Mammary epithelial cell (primary cell): ENCODE measurements at regions of chr4 and their contacts with region 1.

Region 1: GRCh38 chr4:1594871-1595811 is 89.0 kb downstream of the FAM53A start:
- DNase-seq: no peak
- H3K4me3 ChIP-seq: no peak overlapping the region
- H3K27ac ChIP-seq: no peak overlapping the region
- H3K4me1 ChIP-seq: no peaks in the 10 kb centered on the region
- H3K27me3 ChIP-seq: peaks cover 20% of the 10 kb centered on the region
- CTCF ChIP-seq: no peak

Region 2: GRCh38 chr4:766152-766515 is 829.0 kb before region 1 on chr4:
- CTCF ChIA-PET with region 1: no interaction called
- dilution Hi-C with region 1: no loop called
- in situ Hi-C with region 1: no loop called
- intact Hi-C with region 1: no loop called
- DNase-seq: peak; percentile 54
- H3K4me3 ChIP-seq: no peak overlapping the region
- H3K27ac ChIP-seq: no peak overlapping the region
- H3K4me1 ChIP-seq: peaks cover 14% of the 10 kb centered on the region
- H3K27me3 ChIP-seq: no peaks in the 10 kb centered on the region
- CTCF ChIP-seq: no peak

Region 3: GRCh38 chr4:1210971-1211370 is 384.2 kb before region 1 on chr4:
- CTCF ChIA-PET with region 1: interaction called, 11 read pairs
- dilution Hi-C with region 1: no loop called
- in situ Hi-C with region 1: no loop called
- intact Hi-C with region 1: no loop called
- DNase-seq: no peak
- H3K4me3 ChIP-seq: no peak overlapping the region
- H3K27ac ChIP-seq: no peak overlapping the region
- H3K4me1 ChIP-seq: no peaks in the 10 kb centered on the region
- H3K27me3 ChIP-seq: no peaks in the 10 kb centered on the region
- CTCF ChIP-seq: no peak

Region 4: DNA sequence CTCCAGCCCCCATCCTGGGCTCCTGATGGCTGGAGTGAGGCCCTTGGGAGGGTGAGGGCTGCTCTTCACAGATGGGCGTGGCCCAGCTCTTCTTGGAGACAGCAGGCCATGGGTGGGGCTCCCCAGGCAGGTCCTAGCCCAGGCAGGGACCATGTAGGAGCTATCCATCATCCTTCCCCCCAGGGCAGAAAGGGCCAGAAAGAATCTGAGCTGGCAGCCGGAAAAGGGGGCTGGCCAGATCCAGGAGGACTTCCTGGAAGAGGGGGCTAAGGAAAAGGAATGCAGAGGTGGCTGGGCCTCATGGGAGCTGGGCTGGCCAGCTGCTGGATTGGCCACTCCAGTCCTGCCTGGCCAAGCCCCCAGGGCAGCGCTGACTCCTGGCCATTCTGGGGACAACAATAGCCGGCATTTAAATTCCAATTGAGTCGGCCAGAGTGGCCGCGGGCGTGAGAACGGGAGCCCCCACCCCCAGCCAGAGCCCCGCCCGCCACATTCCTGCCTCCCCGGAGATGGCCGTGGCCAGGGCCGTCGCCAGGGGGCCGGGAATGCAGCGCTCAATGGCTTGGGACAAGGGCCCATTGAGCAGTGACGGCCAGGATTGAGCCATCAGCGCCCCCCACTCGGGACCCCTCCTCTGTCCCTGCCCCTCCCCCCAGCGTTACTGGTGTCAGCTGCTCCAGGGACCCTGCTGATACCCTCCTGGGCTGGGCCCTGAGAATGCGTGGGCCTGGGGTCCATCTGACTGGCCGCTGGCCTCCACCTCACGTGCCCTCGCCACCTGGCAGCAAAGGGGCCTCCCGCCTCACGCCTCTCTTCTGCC is 182.9 kb after region 1 on chr4:
- CTCF ChIA-PET with region 1: no interaction called
- dilution Hi-C with region 1: no loop called
- in situ Hi-C with region 1: no loop called
- intact Hi-C with region 1: no loop called
- DNase-seq: peak; percentile 43
- H3K4me3 ChIP-seq: no peak overlapping the region
- H3K27ac ChIP-seq: no peak overlapping the region
- H3K4me1 ChIP-seq: peaks cover 20% of the 10 kb centered on the region
- H3K27me3 ChIP-seq: no peaks in the 10 kb centered on the region
- CTCF ChIP-seq: no peak